ENCODE measurements at regions of chr5 and their contacts with region 1.

Region 1: GRCh38 chr5:74766849-74767578 is at the starts of genes GFM2 and NSA2:
- DNase-seq: peak; percentile 90
- H3K4me3 ChIP-seq: peak within 1 kb of the TSS; percentile 87 to 94
- H3K27ac ChIP-seq: peak within 1 kb of the TSS; percentile 80 to 81
- H3K4me1 ChIP-seq: peaks cover 5% of the 10 kb centered on the region
- H3K27me3 ChIP-seq: no peaks in the 10 kb centered on the region
- CTCF ChIP-seq: peak in 1 of 4 experiments; percentile 12
- POLR2A ChIP-seq: peak; percentile 12
- total RNA-seq, gene GFM2: 21.9 to 34.7 TPM
- total RNA-seq, gene NSA2: 59.2 to 130 TPM

Region 2: GRCh38 chr5:74919487-74919886 is 152.5 kb after region 1 on chr5:
- intact Hi-C with region 1: loop called (anchors 2 kb)
- DNase-seq: peak; percentile 12
- H3K4me3 ChIP-seq: no peak overlapping the region
- H3K27ac ChIP-seq: no peak overlapping the region
- H3K4me1 ChIP-seq: no peaks in the 10 kb centered on the region
- H3K27me3 ChIP-seq: no peaks in the 10 kb centered on the region
- CTCF ChIP-seq: peak in 3 of 4 experiments; percentile 59 to 67 (median 60)
- POLR2A ChIP-seq: no peak

Measured in prostate gland (tissue), 2 donors.